Activated B cell treated with CpG ODN at 0.5 μM for 24 hours (primary cell): ENCODE measurements at regions of chr10 and their contacts with region 1.

Region 1: GRCh38 chr10:110547139-110547761 is 20.2 kb upstream of the SMC3 start:
- DNase-seq: no peak
- ATAC-seq: peak; percentile 67
- H3K4me3 Mint-ChIP-seq: no peak overlapping the region
- H3K27ac Mint-ChIP-seq: no peak overlapping the region
- H3K4me1 Mint-ChIP-seq: peaks cover 6% of the 10 kb centered on the region
- H3K27me3 Mint-ChIP-seq: peaks cover 10% of the 10 kb centered on the region
- CTCF ChIP-seq: no peak

Region 2: DNA sequence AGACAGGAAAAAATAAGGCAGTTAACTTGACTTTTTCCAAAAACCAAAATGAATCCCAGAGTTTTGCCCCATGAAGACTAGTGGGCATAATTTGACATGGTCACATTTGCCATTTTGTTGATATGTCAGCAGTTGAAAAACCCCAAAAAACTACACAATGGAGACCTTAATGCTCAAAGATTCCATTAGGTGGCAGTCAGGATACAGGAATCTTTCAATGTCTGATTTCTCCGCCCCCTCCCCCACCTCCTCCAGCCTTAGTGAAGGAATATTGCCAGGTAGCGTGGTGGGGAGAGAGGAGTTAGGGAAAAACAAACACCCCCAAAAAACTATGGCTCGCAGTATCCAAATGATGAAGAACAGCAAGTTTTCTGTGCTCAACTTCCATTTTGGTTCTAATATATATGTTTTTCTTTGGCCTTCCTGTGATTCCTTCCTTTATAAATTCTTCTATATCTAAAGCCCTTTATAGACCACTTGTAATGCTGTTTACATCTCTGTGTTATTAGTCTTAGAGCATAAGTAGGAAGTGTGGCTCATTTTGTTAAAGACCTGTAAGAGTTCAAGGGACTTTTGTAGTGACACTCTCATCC is 235.8 kb before region 1 on chr10:
- CTCF ChIA-PET with region 1: interaction called, 59 read pairs
- POLR2A ChIA-PET with region 1: interaction called, 13 read pairs
- intact Hi-C with region 1: loop called (anchors 1 kb)
- DNase-seq: no peak
- ATAC-seq: peak; percentile 83
- H3K4me3 Mint-ChIP-seq: no peak overlapping the region
- H3K27ac Mint-ChIP-seq: peak overlapping the region; percentile 13
- H3K4me1 Mint-ChIP-seq: peaks cover 19% of the 10 kb centered on the region
- H3K27me3 Mint-ChIP-seq: no peaks in the 10 kb centered on the region
- CTCF ChIP-seq: no peak

Region 3: DNA sequence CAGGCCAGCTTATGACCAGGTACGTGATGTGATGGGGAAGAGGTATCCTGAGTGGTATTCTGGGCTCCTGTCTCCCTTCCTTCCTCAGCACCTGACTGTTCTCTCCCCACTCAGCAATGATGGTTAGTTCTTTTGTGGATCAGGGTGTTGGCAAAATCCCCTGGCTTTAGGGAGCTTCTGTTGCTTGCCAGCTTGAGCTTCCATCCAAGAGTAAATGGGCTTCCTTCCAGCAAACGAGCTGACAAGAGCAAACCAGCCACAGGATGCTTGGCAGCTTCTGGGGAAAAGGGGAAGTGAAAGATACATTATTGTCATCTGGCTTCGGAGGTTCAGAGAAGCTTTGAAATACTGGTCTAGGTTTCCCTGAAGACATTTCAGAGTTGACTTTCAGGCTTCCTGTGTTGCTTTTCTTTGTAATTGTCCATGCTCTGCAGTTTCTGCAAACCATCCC is 44.4 kb before region 1 on chr10:
- CTCF ChIA-PET with region 1: interaction called, 25 read pairs
- POLR2A ChIA-PET with region 1: interaction called, 8 read pairs
- intact Hi-C with region 1: loop called (anchors 1 kb)
- DNase-seq: no peak
- ATAC-seq: peak; percentile 53
- H3K4me3 Mint-ChIP-seq: peak overlapping the region; percentile 72
- H3K27ac Mint-ChIP-seq: peak overlapping the region; percentile 90
- H3K4me1 Mint-ChIP-seq: peaks cover 76% of the 10 kb centered on the region
- H3K27me3 Mint-ChIP-seq: no peaks in the 10 kb centered on the region
- CTCF ChIP-seq: no peak

Region 4: GRCh38 chr10:110600487-110601101 is 53.3 kb after region 1 on chr10:
- CTCF ChIA-PET with region 1: interaction called, 16 read pairs
- POLR2A ChIA-PET with region 1: no interaction called
- intact Hi-C with region 1: loop called (anchors 2 kb)
- DNase-seq: no peak
- ATAC-seq: peak; percentile 67
- H3K4me3 Mint-ChIP-seq: no peak overlapping the region
- H3K27ac Mint-ChIP-seq: no peak overlapping the region
- H3K4me1 Mint-ChIP-seq: no peaks in the 10 kb centered on the region
- H3K27me3 Mint-ChIP-seq: no peaks in the 10 kb centered on the region
- CTCF ChIP-seq: no peak